Gastrocnemius medialis (tissue), 4 donors: ENCODE measurements at regions of chr10 and their contacts with region 1.

Region 1: DNA sequence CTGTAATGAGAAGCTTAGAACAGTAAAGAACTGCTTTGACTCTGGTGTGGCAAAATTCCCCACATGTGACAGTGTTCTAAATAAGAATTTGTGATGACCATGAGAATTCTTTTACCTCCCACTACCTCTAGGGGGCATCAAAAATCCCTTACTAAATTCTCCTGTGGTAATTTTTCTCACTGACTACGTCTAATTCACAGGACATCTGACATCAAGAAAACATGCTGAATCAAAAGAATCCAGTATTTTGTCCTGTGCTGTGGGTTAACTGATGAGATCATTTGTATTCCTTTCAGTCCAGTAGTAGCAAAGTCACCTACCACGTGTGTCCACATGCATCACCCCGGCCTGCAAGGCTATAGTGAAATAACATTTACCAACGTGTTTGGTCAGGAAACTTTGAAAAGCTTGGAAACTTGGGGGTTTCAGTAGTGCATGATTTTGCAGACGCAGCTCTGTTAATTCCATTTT is 103.8 kb downstream of the ATE1 start:
- DNase-seq: no peak
- ATAC-seq: peak in 1 of 2 donors; percentile 70
- H3K4me3 ChIP-seq: no peak overlapping the region
- H3K27ac ChIP-seq: no peak overlapping the region
- H3K4me1 ChIP-seq: peaks cover 0 to 3% of the 10 kb centered on the region in 2 donors
- H3K27me3 ChIP-seq: no peaks in the 10 kb centered on the region
- CTCF ChIP-seq: peak; percentile 36 to 65 (median 48)
- POLR2A ChIP-seq: no peak

Region 2: GRCh38 chr10:121792198-121792597 is 31.8 kb before region 1 on chr10:
- in situ Hi-C with region 1: no loop called
- intact Hi-C with region 1: no loop called
- DNase-seq: no peak
- ATAC-seq: no peak
- H3K4me3 ChIP-seq: no peak overlapping the region
- H3K27ac ChIP-seq: no peak overlapping the region
- H3K4me1 ChIP-seq: no peaks in the 10 kb centered on the region
- H3K27me3 ChIP-seq: no peaks in the 10 kb centered on the region
- CTCF ChIP-seq: no peak
- POLR2A ChIP-seq: no peak

Region 3: GRCh38 chr10:121900443-121901174 is 76.6 kb after region 1 on chr10:
- in situ Hi-C with region 1: no loop called
- intact Hi-C with region 1: loop called (anchors 2 kb)
- DNase-seq: no peak
- ATAC-seq: peak in 1 of 2 donors; percentile 84
- H3K4me3 ChIP-seq: no peak overlapping the region
- H3K27ac ChIP-seq: no peak overlapping the region
- H3K4me1 ChIP-seq: peaks cover 0 to 3% of the 10 kb centered on the region in 2 donors
- H3K27me3 ChIP-seq: no peaks in the 10 kb centered on the region
- CTCF ChIP-seq: peak; percentile 28 to 71 (median 48)
- POLR2A ChIP-seq: no peak